ENCODE measurements at regions of chr3 and their contacts with region 1.

Region 1: GRCh38 chr3:34683851-34684250 is 885.4 kb downstream of the PDCD6IP start:
- DNase-seq: peak; percentile 42
- H3K4me3 ChIP-seq: no peak overlapping the region
- H3K27ac ChIP-seq: no peak overlapping the region
- H3K4me1 ChIP-seq: no peaks in the 10 kb centered on the region
- H3K27me3 ChIP-seq: no peaks in the 10 kb centered on the region
- CTCF ChIP-seq: peak; percentile 39 to 58
- POLR2A ChIP-seq: no peak

Region 2: GRCh38 chr3:33889394-33890039 is 794.3 kb before region 1 on chr3:
- CTCF ChIA-PET with region 1: interaction called, 203 read pairs
- POLR2A ChIA-PET with region 1: no interaction called
- dilution Hi-C with region 1: no loop called
- intact Hi-C with region 1: no loop called
- DNase-seq: no peak
- H3K4me3 ChIP-seq: no peak overlapping the region
- H3K27ac ChIP-seq: no peak overlapping the region
- H3K4me1 ChIP-seq: no peaks in the 10 kb centered on the region
- H3K27me3 ChIP-seq: peaks cover 0 to 12% of the 10 kb centered on the region in 2 experiments
- CTCF ChIP-seq: no peak
- POLR2A ChIP-seq: no peak

Region 3: DNA sequence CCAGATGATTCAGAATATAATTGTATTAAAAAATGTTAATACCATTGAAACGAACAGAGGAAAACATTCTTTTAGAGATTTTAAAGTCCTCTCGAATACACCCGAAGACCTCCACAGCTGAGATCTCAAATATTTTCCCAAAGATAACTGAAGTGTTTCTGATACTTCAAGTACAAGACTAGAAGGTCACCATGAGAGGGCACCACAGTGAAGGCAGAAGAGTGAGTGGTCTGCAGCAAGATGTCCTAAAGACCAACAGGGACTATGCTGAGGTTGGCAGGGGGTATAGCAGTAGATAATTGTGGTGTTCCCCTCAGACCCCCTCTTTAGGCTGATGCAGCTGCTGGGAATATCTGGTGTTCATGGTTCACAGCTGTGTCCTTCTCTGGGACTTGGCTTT is 728.9 kb before region 1 on chr3:
- CTCF ChIA-PET with region 1: interaction called, 13 read pairs
- POLR2A ChIA-PET with region 1: no interaction called
- dilution Hi-C with region 1: no loop called
- intact Hi-C with region 1: loop called (anchors 10 kb)
- DNase-seq: peak; percentile 4
- H3K4me3 ChIP-seq: no peak overlapping the region
- H3K27ac ChIP-seq: no peak overlapping the region
- H3K4me1 ChIP-seq: no peaks in the 10 kb centered on the region
- H3K27me3 ChIP-seq: no peaks in the 10 kb centered on the region
- CTCF ChIP-seq: no peak
- POLR2A ChIP-seq: no peak

Region 4: DNA sequence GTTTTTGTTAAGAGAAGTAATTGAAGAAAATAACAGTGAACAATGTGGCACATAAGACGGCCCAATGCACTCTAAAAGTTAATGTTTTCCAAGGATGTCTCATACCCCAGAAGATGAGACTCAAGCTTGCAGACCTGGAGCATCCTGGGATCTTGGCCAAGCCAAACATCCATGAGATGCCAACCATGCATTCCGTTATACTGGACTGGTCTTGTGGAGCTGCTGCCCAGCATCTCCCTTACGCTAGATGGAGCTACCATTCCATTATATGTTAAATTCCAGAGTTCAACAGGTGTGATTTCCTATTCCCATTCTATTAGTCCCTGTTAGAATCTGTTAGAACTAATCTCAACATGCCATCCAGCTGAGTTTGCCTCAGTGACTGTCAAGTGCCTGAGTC is 703.6 kb before region 1 on chr3:
- CTCF ChIA-PET with region 1: interaction called, 66 read pairs
- POLR2A ChIA-PET with region 1: no interaction called
- dilution Hi-C with region 1: no loop called
- intact Hi-C with region 1: loop called (anchors 1 kb)
- DNase-seq: peak; percentile 31
- H3K4me3 ChIP-seq: no peak overlapping the region
- H3K27ac ChIP-seq: no peak overlapping the region
- H3K4me1 ChIP-seq: no peaks in the 10 kb centered on the region
- H3K27me3 ChIP-seq: peaks cover 0 to 2% of the 10 kb centered on the region in 2 experiments
- CTCF ChIP-seq: peak; percentile 41 to 44
- POLR2A ChIP-seq: no peak

Region 5: GRCh38 chr3:34106879-34107278 is 577.0 kb before region 1 on chr3:
- CTCF ChIA-PET with region 1: interaction called, 109 read pairs
- POLR2A ChIA-PET with region 1: no interaction called
- dilution Hi-C with region 1: no loop called
- intact Hi-C with region 1: loop called (anchors 1 kb)
- DNase-seq: peak; percentile 79
- H3K4me3 ChIP-seq: no peak overlapping the region
- H3K27ac ChIP-seq: no peak overlapping the region
- H3K4me1 ChIP-seq: no peaks in the 10 kb centered on the region
- H3K27me3 ChIP-seq: peaks cover 6 to 9% of the 10 kb centered on the region in 2 experiments
- CTCF ChIP-seq: peak; percentile 78 to 86
- POLR2A ChIP-seq: no peak

Region 6: GRCh38 chr3:34568766-34569165 is 115.1 kb before region 1 on chr3:
- CTCF ChIA-PET with region 1: no interaction called
- POLR2A ChIA-PET with region 1: no interaction called
- dilution Hi-C with region 1: no loop called
- intact Hi-C with region 1: no loop called
- DNase-seq: peak; percentile 14
- H3K4me3 ChIP-seq: no peak overlapping the region
- H3K27ac ChIP-seq: no peak overlapping the region
- H3K4me1 ChIP-seq: no peaks in the 10 kb centered on the region
- H3K27me3 ChIP-seq: no peaks in the 10 kb centered on the region
- CTCF ChIP-seq: no peak
- POLR2A ChIP-seq: no peak

Region 7: DNA sequence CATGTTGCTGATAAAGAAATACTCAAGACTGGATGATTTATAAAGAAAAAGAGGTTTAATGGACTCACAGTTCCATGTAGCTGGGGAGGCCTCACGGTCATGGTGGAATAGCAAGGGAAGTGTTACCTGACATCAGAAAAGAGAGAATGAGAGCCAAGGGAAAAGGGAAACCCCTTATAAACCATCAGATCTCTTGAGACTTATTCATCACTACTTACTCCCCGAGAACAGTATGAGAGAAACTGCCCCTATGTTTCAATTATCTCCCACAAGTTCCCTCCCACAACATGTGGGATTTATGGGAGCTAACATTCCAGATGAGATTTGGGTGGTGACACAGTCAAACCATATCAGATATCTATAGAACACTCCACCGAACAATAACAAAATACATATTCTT is 19.2 kb after region 1 on chr3:
- CTCF ChIA-PET with region 1: no interaction called
- POLR2A ChIA-PET with region 1: no interaction called
- dilution Hi-C with region 1: no loop called
- intact Hi-C with region 1: no loop called
- DNase-seq: no peak
- H3K4me3 ChIP-seq: no peak overlapping the region
- H3K27ac ChIP-seq: no peak overlapping the region
- H3K4me1 ChIP-seq: no peaks in the 10 kb centered on the region
- H3K27me3 ChIP-seq: no peaks in the 10 kb centered on the region
- CTCF ChIP-seq: no peak
- POLR2A ChIP-seq: no peak